PC-3 (cell line): ENCODE measurements at regions of chr2 and their contacts with region 1.

Region 1: GRCh38 chr2:81093031-81093430 is 788.5 kb upstream of the LRRTM1 start:
- DNase-seq: peak; percentile 39
- ATAC-seq: no peak
- H3K4me3 ChIP-seq: no peak overlapping the region
- H3K27ac ChIP-seq: no peak overlapping the region
- H3K4me1 ChIP-seq: peaks cover 12% of the 10 kb centered on the region; the same call in 1 of the 2 replicates
- H3K27me3 ChIP-seq: no peaks in the 10 kb centered on the region
- CTCF ChIP-seq: no peak

Region 2: DNA sequence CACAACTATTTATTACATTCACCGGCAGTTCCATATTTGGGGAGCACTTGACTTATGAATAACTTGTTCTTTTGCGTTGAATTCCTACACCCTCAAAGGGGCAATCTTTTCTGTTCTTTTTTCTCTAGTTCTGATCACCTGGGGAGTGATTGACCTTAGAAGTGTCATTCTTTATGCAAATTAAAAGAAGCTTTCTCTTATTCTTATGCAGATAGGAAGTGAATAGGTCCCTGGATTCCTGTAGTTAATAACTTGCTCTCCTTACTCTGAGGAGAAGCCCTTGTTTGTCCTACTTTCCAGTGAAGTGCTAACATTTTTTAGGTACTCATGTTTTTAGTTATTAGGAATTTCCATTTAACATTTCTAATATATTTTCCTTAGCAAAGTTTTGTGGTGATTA is 218.7 kb before region 1 on chr2:
- CTCF ChIA-PET with region 1: no interaction called
- POLR2A ChIA-PET with region 1: no interaction called
- intact Hi-C with region 1: no loop called
- DNase-seq: no peak
- ATAC-seq: no peak
- H3K4me3 ChIP-seq: no peak overlapping the region
- H3K27ac ChIP-seq: no peak overlapping the region
- H3K4me1 ChIP-seq: no peaks in the 10 kb centered on the region
- H3K27me3 ChIP-seq: no peaks in the 10 kb centered on the region
- CTCF ChIP-seq: no peak

Region 3: GRCh38 chr2:81235601-81236000 is 142.6 kb after region 1 on chr2:
- CTCF ChIA-PET with region 1: no interaction called
- POLR2A ChIA-PET with region 1: no interaction called
- intact Hi-C with region 1: loop called (anchors 5 kb)
- DNase-seq: peak; percentile 5
- ATAC-seq: no peak; the same call in 1 of the 2 replicates
- H3K4me3 ChIP-seq: no peak overlapping the region
- H3K27ac ChIP-seq: no peak overlapping the region
- H3K4me1 ChIP-seq: peaks cover 9% of the 10 kb centered on the region; the same call in 1 of the 2 replicates
- H3K27me3 ChIP-seq: no peaks in the 10 kb centered on the region
- CTCF ChIP-seq: no peak; the same call in 1 of the 2 replicates

Region 4: DNA sequence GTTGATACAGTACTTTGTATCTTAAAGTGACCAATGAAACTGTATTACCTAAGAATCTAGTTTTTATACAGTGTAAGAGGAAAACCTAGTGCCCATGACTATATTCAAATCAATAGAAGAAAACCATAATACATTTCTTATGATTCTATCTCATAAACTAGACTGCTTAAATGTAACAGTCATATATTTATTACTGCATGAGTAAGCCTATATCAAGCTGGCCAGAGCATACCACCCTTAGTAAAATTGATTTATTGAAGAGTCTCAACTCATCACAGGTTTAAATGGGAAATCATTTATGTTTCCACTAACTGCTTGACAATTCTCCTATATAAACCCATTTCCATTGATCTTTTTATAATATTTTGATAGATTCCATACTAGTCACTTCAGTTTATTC is 270.8 kb after region 1 on chr2:
- CTCF ChIA-PET with region 1: no interaction called
- POLR2A ChIA-PET with region 1: no interaction called
- intact Hi-C with region 1: loop called (anchors 2 kb)
- DNase-seq: peak; percentile 27
- ATAC-seq: peak; percentile 86
- H3K4me3 ChIP-seq: no peak overlapping the region
- H3K27ac ChIP-seq: no peak overlapping the region
- H3K4me1 ChIP-seq: no peaks in the 10 kb centered on the region
- H3K27me3 ChIP-seq: no peaks in the 10 kb centered on the region
- CTCF ChIP-seq: no peak

Region 5: DNA sequence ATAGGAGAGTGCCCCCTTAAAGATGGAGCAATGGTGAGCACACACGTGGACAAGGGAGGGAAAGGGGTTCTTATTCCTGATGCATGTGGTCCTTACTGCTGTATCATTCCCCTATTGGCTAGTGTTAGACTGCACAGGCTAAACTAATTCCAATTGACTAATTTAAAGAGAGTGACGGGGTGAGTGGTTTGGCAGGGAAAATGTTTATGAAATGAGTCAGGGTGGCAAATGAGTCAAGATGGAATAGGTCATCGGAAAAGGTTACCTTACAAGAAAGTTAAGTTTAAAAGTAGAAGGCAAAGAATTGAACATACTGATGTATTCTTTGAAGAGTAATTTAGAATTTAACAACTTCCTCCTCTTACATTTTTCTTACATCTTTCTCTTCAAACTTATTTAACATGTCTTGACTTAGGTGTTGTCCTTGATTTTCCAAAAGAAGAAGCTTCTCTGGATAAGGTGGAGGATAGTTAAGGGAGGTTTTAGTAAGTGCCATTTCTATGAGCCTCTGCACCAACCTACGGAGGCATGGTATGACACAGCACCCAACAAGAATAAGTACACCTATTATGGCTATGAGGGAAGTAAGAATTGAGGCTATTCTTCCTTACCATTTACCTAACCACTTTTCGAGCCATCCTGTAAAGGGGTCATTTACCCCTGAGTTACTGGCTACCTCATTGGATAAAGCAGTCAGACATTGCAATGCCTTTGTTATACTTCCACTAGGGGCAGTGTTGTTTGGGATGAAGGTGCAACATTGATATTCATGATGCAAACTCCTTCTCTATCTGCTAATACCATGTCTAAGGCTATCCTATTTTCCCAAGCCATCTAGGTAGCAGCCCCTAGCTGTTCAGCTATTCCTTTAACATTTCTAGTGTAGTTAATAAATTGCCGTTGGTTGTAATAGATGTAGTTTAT is 557.3 kb after region 1 on chr2:
- CTCF ChIA-PET with region 1: no interaction called
- POLR2A ChIA-PET with region 1: no interaction called
- intact Hi-C with region 1: loop called (anchors 10 kb)
- DNase-seq: peak; percentile 91
- ATAC-seq: peak; percentile 79
- H3K4me3 ChIP-seq: no peak overlapping the region
- H3K27ac ChIP-seq: peak overlapping the region; percentile 90
- H3K4me1 ChIP-seq: peaks cover 27% of the 10 kb centered on the region
- H3K27me3 ChIP-seq: no peaks in the 10 kb centered on the region
- CTCF ChIP-seq: peak; percentile 48